ENCODE measurements at regions of chr2 and their contacts with region 1.

Region 1: GRCh38 chr2:118882709-118883210 is 35.3 kb upstream of the EN1 start:
- DNase-seq: peak; percentile 76
- H3K4me3 ChIP-seq: peak overlapping the region in 1 of 4 donors; percentile 28
- H3K27ac ChIP-seq: no peak overlapping the region
- H3K4me1 ChIP-seq: peaks cover 0 to 6% (median 0%) of the 10 kb centered on the region in 4 donors
- H3K27me3 ChIP-seq: peaks cover 0 to 43% (median 0%) of the 10 kb centered on the region in 3 donors
- CTCF ChIP-seq: peak; percentile 48 to 74 (median 60)
- EP300 ChIP-seq: no peak
- POLR2A ChIP-seq: no peak

Region 2: GRCh38 chr2:119025762-119026389 is 143.1 kb after region 1 on chr2:
- intact Hi-C with region 1: no loop called
- DNase-seq: no peak
- H3K4me3 ChIP-seq: no peak overlapping the region
- H3K27ac ChIP-seq: no peak overlapping the region
- H3K4me1 ChIP-seq: no peaks in the 10 kb centered on the region
- H3K27me3 ChIP-seq: peaks cover 0 to 4% (median 0%) of the 10 kb centered on the region in 3 donors
- CTCF ChIP-seq: no peak
- EP300 ChIP-seq: no peak
- POLR2A ChIP-seq: no peak

Region 3: GRCh38 chr2:119476301-119477021 is 593.7 kb after region 1 on chr2:
- intact Hi-C with region 1: loop called (anchors 5 kb)
- DNase-seq: peak; percentile 71
- H3K4me3 ChIP-seq: no peak overlapping the region
- H3K27ac ChIP-seq: no peak overlapping the region
- H3K4me1 ChIP-seq: peaks cover 0 to 5% (median 0%) of the 10 kb centered on the region in 4 donors
- H3K27me3 ChIP-seq: peaks cover 0 to 9% (median 0%) of the 10 kb centered on the region in 3 donors
- CTCF ChIP-seq: peak in 3 of 4 experiments; percentile 71 to 92 (median 81)
- EP300 ChIP-seq: no peak
- POLR2A ChIP-seq: no peak

Measured in sigmoid colon (tissue), 7 donors.